IMR-90 (cell line): ENCODE measurements at regions of chr16 and their contacts with region 1.

Region 1: DNA sequence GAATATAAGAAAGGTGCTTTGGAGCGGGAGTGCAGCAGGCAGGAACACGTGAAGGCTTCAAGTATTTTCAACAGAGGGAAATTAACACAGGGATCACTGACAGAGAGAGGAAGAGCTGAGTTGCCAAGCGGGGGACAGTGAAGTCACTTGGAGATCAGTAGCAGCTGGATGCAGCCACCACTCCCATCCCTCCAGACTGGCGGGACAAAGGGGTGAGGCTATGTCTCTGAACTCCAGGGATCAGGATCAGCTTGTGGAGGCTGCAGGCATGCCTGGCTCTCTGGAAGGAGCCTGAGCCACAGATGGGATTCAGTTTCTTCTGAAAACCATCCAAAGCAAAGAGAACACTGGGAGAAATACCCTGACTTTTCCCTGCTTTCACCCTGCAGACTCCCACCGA is 113.7 kb upstream of the IRX3 start:
- DNase-seq: no peak
- ATAC-seq: no peak
- H3K4me3 ChIP-seq: no peak overlapping the region
- H3K27ac ChIP-seq: no peak overlapping the region
- H3K4me1 ChIP-seq: no peaks in the 10 kb centered on the region
- H3K27me3 ChIP-seq: no peaks in the 10 kb centered on the region; the same call in 1 of the 2 replicates
- CTCF ChIP-seq: no peak
- POLR2A ChIP-seq: no peak
- RAD21 ChIP-seq: no peak

Region 2: DNA sequence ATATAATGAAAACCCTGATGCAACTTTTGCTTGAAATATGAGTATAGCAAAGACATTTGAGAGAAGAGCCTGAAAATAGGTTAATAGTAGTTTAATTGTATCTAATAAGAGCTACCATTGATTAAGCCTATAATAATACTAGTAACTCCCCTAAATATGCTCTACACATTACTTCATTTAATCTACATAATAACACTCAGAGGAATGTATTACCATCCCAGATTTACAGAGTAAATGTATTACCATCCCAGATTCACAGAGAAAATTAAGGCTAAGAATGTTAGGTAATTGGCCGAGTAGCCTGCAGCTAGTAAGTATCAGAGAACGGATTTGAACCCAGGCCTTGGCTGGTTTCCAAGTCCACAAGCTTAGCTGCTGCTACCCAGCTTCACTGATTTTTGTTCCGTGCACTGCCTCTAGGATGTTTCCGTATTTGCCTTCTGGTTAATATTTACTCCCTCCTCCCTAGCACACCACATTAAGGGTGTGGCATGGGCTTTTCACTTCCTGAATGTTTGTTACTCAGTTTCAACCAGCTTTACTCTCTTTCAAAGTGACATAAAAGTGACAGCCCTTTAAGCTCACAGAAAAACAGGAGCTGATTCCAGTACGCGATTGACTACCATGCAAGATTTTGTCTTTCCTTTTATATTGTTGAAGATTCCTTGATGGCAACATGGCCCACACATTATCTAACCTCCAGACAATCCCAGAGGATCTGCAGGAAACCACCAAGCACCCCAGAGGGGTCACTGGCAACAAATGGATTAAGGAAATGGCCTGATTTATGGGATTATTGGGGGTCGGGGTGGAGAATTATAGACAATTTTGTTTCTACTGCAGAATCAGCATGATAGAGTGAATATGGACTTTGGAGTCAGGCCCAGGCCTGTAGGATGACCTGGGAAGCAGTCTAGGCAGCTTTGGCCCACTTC is 1826.6 kb before region 1 on chr16:
- CTCF ChIA-PET with region 1: no interaction called
- POLR2A ChIA-PET with region 1: no interaction called
- dilution Hi-C with region 1: no loop called
- in situ Hi-C with region 1: no loop called
- intact Hi-C with region 1: no loop called
- DNase-seq: no peak
- ATAC-seq: no peak
- H3K4me3 ChIP-seq: no peak overlapping the region
- H3K27ac ChIP-seq: no peak overlapping the region
- H3K4me1 ChIP-seq: no peaks in the 10 kb centered on the region
- H3K27me3 ChIP-seq: no peaks in the 10 kb centered on the region
- CTCF ChIP-seq: no peak
- POLR2A ChIP-seq: no peak
- RAD21 ChIP-seq: no peak

Region 3: GRCh38 chr16:54373534-54374520 is 26.4 kb before region 1 on chr16:
- CTCF ChIA-PET with region 1: no interaction called
- POLR2A ChIA-PET with region 1: interaction called, 23 read pairs
- dilution Hi-C with region 1: no loop called
- in situ Hi-C with region 1: no loop called
- intact Hi-C with region 1: no loop called
- DNase-seq: peak; percentile 72
- ATAC-seq: peak; percentile 78
- H3K4me3 ChIP-seq: no peak overlapping the region
- H3K27ac ChIP-seq: 0 out of 2 replicates have a peak overlapping the region, but pooled peaks have one; percentile 6
- H3K4me1 ChIP-seq: no peaks in the 10 kb centered on the region; the same call in 1 of the 2 replicates
- H3K27me3 ChIP-seq: no peaks in the 10 kb centered on the region
- CTCF ChIP-seq: no peak
- POLR2A ChIP-seq: no peak
- RAD21 ChIP-seq: no peak